Left ventricle myocardium inferior (tissue), 1 donor: ENCODE measurements at regions of chr4 and their contacts with region 1.

Region 1: DNA sequence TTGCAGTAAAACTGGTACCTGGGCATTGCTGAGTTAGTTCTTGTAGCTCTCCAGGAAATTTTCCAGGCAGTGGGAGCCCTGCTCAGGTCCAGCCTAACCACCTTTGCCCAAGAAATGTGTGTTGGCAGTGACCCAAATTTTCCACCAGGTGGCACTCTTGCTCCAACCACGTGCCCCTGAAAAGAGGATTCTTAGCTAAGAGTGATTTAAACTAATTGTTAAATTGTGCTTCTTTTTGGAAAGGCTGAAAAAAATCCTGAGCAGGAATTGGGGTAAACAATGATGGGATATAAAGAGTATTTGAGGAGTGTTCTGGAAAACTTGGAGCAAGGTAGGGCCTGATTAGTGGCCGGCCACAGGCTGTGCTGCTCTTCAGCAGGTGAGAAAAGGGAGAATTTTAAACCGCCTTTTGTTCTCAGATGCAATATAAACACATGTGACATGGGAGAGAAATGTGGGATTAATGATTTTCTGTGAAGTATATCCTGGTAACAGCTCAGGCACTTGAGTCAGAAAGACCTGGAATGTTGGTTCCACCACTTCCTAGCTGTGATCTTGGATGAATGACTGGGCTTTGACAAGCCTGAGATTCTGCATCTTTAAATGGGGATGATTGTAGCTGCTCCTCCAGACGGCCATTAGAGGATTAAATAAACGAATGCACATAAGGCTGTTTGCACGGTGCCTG is 219.6 kb downstream of the PTTG2 start:
- DNase-seq: peak; percentile 61
- H3K4me3 ChIP-seq: no peak overlapping the region
- H3K27ac ChIP-seq: no peak overlapping the region
- H3K4me1 ChIP-seq: peaks cover 33% of the 10 kb centered on the region
- H3K27me3 ChIP-seq: no peaks in the 10 kb centered on the region
- CTCF ChIP-seq: peak; percentile 97

Region 2: GRCh38 chr4:37994569-37994968 is 185.3 kb before region 1 on chr4:
- intact Hi-C with region 1: no loop called
- DNase-seq: no peak
- H3K4me3 ChIP-seq: no peak overlapping the region
- H3K27ac ChIP-seq: peak overlapping the region; percentile 3
- H3K4me1 ChIP-seq: peaks cover 79% of the 10 kb centered on the region
- H3K27me3 ChIP-seq: no peaks in the 10 kb centered on the region
- CTCF ChIP-seq: no peak

Region 3: DNA sequence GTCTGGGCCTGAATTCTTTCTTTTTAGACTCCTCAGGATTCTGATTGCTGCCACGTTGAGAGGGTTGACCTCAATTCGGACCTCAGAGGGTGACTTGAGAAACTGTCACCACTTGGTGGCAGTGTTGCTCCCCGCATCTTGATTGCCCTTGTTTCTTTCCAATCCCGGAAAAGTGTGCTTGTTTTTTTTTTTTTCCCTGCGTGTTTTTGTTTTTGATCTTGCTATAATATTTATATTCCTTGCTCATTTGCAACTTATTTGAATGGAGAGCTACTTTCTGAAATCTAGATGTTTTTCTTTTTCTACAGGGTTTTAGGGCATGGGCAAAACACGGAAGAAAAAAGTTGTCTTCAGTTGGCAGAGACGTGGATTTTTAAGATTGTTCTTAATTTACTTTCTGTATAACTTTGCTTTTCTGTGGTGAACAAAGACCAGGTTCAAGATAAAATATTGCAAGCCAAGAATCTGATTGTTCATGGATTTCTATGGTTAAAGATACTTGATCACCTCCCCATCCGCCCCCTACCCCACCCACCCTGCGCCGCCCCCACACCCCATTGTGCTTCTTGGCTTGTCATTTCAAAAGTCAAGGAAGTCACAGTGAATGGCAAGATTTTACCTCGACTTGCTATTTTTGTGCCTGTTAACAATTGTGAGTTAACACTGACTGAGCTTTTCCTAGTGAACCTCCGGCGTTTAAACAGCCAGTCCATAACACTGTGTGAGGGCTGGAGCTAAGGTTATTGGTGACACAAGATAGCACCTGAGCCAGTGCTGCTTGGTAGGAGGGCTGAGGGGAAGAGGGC is 117.5 kb before region 1 on chr4:
- intact Hi-C with region 1: loop called (anchors 10 kb)
- DNase-seq: peak; percentile 80
- H3K4me3 ChIP-seq: peak overlapping the region; percentile 51
- H3K27ac ChIP-seq: peak overlapping the region; percentile 75
- H3K4me1 ChIP-seq: peaks cover 34% of the 10 kb centered on the region
- H3K27me3 ChIP-seq: no peaks in the 10 kb centered on the region
- CTCF ChIP-seq: peak; percentile 92

Region 4: GRCh38 chr4:38319456-38320342 is 139.9 kb after region 1 on chr4:
- intact Hi-C with region 1: loop called (anchors 10 kb)
- DNase-seq: peak; percentile 95
- H3K4me3 ChIP-seq: peak overlapping the region; percentile 58
- H3K27ac ChIP-seq: peak overlapping the region; percentile 90
- H3K4me1 ChIP-seq: peaks cover 24% of the 10 kb centered on the region
- H3K27me3 ChIP-seq: no peaks in the 10 kb centered on the region
- CTCF ChIP-seq: peak; percentile 99

Region 5: GRCh38 chr4:38681281-38681991 is 501.6 kb after region 1 on chr4:
- intact Hi-C with region 1: loop called (anchors 10 kb)
- DNase-seq: no peak
- H3K4me3 ChIP-seq: no peak overlapping the region
- H3K27ac ChIP-seq: peak overlapping the region; percentile 17
- H3K4me1 ChIP-seq: peaks cover 99% of the 10 kb centered on the region
- H3K27me3 ChIP-seq: no peaks in the 10 kb centered on the region
- CTCF ChIP-seq: no peak

Region 6: DNA sequence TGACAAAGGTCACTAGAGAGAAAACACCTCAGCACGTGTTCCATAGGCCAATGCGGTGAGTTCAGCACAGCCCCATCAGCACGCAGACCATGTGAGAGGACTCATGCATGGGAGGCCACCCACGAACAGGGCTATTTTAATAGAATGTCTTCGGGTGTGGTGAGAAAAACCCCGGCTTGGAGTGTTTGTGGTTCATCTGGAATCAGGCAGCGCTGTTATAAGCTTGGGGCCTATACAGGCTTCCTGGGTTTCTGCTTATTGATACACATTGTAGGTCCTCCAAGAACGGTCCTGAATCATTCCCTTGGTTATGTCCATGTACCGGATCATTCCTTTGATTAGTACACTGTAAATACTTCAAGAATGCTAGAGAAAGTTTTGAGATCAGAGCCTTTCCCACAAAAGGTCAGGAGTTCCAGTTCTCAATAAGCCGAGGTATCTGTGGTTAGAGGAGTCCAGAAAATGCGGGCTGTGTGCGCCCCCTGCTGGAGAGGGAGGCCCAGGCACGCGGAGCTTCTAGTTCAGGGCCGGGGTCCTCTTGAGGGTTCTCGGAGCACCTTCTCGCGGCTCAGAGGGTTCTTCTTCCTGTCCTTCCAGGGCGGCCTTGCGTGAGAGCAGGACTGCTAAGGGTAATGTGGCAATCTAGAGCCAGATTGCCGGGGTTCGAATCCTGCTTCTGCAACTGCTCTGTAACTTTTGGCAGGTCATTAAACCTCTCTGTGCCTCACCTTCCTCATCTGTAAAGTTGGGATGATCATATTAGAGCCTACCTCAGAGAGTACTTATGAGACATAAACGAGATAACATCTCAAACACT is 551.2 kb after region 1 on chr4:
- intact Hi-C with region 1: loop called (anchors 5 kb)
- DNase-seq: peak; percentile 79
- H3K4me3 ChIP-seq: no peak overlapping the region
- H3K27ac ChIP-seq: no peak overlapping the region
- H3K4me1 ChIP-seq: peaks cover 8% of the 10 kb centered on the region
- H3K27me3 ChIP-seq: no peaks in the 10 kb centered on the region
- CTCF ChIP-seq: peak; percentile 96